ENCODE measurements at regions of chr12 and their contacts with region 1.

Region 1: DNA sequence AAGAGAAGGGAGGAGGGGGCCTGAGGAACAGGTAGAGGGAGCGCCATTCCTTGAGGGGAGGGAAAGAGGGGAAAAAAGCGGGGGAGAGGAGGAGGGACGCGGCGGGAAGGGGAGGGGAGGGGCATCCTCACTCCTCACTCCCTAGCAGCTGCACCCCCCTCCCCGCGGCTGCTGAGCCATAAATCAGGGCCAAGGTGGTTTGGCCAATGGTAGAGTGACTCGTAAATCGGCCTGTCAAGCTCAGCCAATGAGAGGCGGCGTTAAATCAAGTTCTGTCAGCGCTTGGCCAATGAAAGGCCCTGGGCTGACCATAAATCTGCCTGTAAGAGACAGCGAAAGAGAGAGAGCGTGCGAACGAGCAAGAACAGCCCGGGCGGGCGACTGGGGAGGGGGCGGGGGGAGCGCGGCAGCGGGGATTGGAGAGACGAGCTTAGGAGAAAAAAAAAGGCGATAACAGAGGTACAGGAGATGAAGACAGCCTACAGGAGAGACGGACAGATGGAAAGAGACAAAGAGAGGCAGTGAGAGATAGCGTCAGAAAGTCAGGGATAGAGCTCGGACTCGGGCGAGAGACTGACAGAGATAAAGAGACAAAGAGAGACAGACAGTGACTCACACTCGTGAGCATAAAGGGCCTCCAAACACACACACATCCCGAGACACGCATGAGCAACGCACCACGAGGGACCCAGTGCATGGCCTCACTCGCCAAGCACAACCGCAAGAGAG is 5.1 kb downstream of the GPR84 start:
- DNase-seq: peak; percentile 93
- H3K4me3 Mint-ChIP-seq: no peak overlapping the region
- H3K27ac Mint-ChIP-seq: no peak overlapping the region
- H3K4me1 Mint-ChIP-seq: peaks cover 21% of the 10 kb centered on the region
- H3K27me3 Mint-ChIP-seq: peaks cover 2% of the 10 kb centered on the region

Region 2: GRCh38 chr12:54220092-54220557 is 139.1 kb before region 1 on chr12:
- intact Hi-C with region 1: loop called (anchors 1 kb)
- DNase-seq: peak; percentile 52
- H3K4me3 Mint-ChIP-seq: no peak overlapping the region
- H3K27ac Mint-ChIP-seq: no peak overlapping the region
- H3K4me1 Mint-ChIP-seq: peaks cover 16% of the 10 kb centered on the region
- H3K27me3 Mint-ChIP-seq: peaks cover 2% of the 10 kb centered on the region

Region 3: GRCh38 chr12:54230555-54230954 is 128.6 kb before region 1 on chr12:
- intact Hi-C with region 1: no loop called
- DNase-seq: no peak
- H3K4me3 Mint-ChIP-seq: no peak overlapping the region
- H3K27ac Mint-ChIP-seq: no peak overlapping the region
- H3K4me1 Mint-ChIP-seq: peaks cover 7% of the 10 kb centered on the region
- H3K27me3 Mint-ChIP-seq: no peaks in the 10 kb centered on the region

Region 4: GRCh38 chr12:54259194-54260011 is 99.8 kb before region 1 on chr12:
- intact Hi-C with region 1: no loop called
- DNase-seq: peak; percentile 19
- H3K4me3 Mint-ChIP-seq: peak overlapping the region; percentile 56
- H3K27ac Mint-ChIP-seq: peak overlapping the region; percentile 68
- H3K4me1 Mint-ChIP-seq: peaks cover 19% of the 10 kb centered on the region
- H3K27me3 Mint-ChIP-seq: no peaks in the 10 kb centered on the region

Region 5: GRCh38 chr12:54324617-54325441 is 34.4 kb before region 1 on chr12 and contains the start of gene COPZ1:
- intact Hi-C with region 1: loop called (anchors 1 kb)
- DNase-seq: peak; percentile 91
- H3K4me3 Mint-ChIP-seq: peak within 1 kb of the TSS; percentile 99
- H3K27ac Mint-ChIP-seq: peak within 1 kb of the TSS; percentile 86
- H3K4me1 Mint-ChIP-seq: peaks cover 33% of the 10 kb centered on the region
- H3K27me3 Mint-ChIP-seq: peaks cover 5% of the 10 kb centered on the region
- total RNA-seq, gene COPZ1: 115 and 123 TPM in 2 replicates

Region 6: GRCh38 chr12:54379401-54380201 is 20.4 kb after region 1 on chr12:
- intact Hi-C with region 1: loop called (anchors 1 kb)
- DNase-seq: peak; percentile 84
- H3K4me3 Mint-ChIP-seq: peak overlapping the region; percentile 70
- H3K27ac Mint-ChIP-seq: no peak overlapping the region
- H3K4me1 Mint-ChIP-seq: peaks cover 13% of the 10 kb centered on the region
- H3K27me3 Mint-ChIP-seq: peaks cover 6% of the 10 kb centered on the region

Region 7: GRCh38 chr12:54394281-54394719 is 35.1 kb after region 1 on chr12:
- intact Hi-C with region 1: no loop called
- DNase-seq: no peak
- H3K4me3 Mint-ChIP-seq: no peak overlapping the region
- H3K27ac Mint-ChIP-seq: no peak overlapping the region
- H3K4me1 Mint-ChIP-seq: peaks cover 26% of the 10 kb centered on the region
- H3K27me3 Mint-ChIP-seq: no peaks in the 10 kb centered on the region

Region 8: GRCh38 chr12:54926246-54926645 is 567.0 kb after region 1 on chr12:
- intact Hi-C with region 1: no loop called
- DNase-seq: no peak
- H3K4me3 Mint-ChIP-seq: no peak overlapping the region
- H3K27ac Mint-ChIP-seq: no peak overlapping the region
- H3K4me1 Mint-ChIP-seq: no peaks in the 10 kb centered on the region
- H3K27me3 Mint-ChIP-seq: no peaks in the 10 kb centered on the region